B cell (primary cell): ENCODE measurements at regions of chr2 and their contacts with region 1.

Region 1: DNA sequence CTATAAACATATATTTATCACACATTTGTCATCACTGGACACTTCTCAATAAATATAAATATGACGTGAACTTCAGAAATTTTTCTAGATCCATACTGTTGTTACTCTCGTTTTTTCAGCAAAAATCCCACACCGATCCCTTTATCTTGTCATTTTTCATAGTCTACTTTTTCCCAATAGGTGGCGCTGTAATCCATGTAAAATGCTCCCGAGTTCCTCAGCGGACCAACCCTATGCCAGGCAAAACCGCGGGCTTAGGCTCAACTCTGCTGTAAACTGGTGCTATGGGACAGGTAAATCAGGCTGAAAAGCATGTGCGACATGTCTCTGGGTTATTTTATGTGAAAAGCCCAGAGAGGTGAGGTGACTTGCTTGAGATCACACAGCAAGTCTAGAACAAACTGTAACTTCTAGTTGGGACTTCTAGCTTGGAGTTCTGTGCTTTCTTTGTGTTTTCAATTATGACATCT is 104.0 kb downstream of the COBLL1 start:
- DNase-seq: peak; percentile 86
- ATAC-seq: peak; percentile 68
- H3K4me3 ChIP-seq: peak overlapping the region in 1 of 5 experiments; percentile 1
- H3K4me3 Mint-ChIP-seq: peak overlapping the region; percentile 16
- H3K27ac ChIP-seq: no peak overlapping the region
- H3K27ac Mint-ChIP-seq: peak overlapping the region; percentile 16
- H3K4me1 ChIP-seq: peaks cover 24 to 40% of the 10 kb centered on the region in 2 donors
- H3K4me1 Mint-ChIP-seq: peaks cover 63% of the 10 kb centered on the region
- H3K27me3 ChIP-seq: no peaks in the 10 kb centered on the region
- H3K27me3 Mint-ChIP-seq: no peaks in the 10 kb centered on the region
- CTCF ChIP-seq: peak; percentile 91

Region 2: DNA sequence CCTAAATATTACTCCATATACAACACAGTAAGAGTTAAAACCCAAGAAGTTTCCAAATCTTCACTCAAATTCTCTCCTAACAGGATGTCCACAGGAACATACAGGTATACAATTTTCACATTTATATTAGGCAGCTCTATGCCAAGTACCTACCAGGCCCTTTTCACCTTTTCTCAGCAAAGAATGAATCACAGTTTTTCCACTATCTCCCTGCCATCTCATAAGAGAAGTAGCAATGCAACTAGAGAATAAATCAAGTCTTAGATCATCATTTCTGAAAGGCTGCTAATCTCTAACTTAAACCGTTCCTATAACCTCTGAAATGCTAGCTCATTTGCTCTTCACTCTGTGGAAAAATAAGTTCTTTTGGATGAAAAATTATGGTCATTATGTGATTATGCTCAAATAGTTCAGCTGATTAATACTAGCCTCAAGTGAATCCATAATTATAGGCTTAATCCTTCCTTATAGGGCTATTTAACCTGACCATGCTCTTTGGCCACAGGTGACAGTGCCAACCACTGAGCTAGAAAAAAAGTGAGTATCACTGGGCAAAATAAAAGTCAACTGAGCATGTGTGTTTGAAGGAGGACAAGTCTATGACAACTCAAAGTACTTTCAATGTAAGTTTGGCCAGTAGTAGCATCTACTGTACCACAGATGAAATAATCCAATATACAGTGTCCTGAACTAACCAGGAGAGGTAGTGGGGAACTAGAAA is 24.3 kb after region 1 on chr2:
- CTCF ChIA-PET with region 1: interaction called, 20 read pairs
- POLR2A ChIA-PET with region 1: interaction called, 9 read pairs
- intact Hi-C with region 1: loop called (anchors 1 kb)
- DNase-seq: peak; percentile 47
- ATAC-seq: peak; percentile 22
- H3K4me3 ChIP-seq: peak overlapping the region in 1 of 5 experiments; percentile 76
- H3K4me3 Mint-ChIP-seq: peak overlapping the region; percentile 94
- H3K27ac ChIP-seq: peak overlapping the region; percentile 79 to 95
- H3K27ac Mint-ChIP-seq: peak overlapping the region; percentile 96
- H3K4me1 ChIP-seq: peaks cover 38 to 48% of the 10 kb centered on the region in 2 donors
- H3K4me1 Mint-ChIP-seq: peaks cover 46% of the 10 kb centered on the region
- H3K27me3 ChIP-seq: no peaks in the 10 kb centered on the region
- H3K27me3 Mint-ChIP-seq: no peaks in the 10 kb centered on the region
- CTCF ChIP-seq: no peak

Region 3: DNA sequence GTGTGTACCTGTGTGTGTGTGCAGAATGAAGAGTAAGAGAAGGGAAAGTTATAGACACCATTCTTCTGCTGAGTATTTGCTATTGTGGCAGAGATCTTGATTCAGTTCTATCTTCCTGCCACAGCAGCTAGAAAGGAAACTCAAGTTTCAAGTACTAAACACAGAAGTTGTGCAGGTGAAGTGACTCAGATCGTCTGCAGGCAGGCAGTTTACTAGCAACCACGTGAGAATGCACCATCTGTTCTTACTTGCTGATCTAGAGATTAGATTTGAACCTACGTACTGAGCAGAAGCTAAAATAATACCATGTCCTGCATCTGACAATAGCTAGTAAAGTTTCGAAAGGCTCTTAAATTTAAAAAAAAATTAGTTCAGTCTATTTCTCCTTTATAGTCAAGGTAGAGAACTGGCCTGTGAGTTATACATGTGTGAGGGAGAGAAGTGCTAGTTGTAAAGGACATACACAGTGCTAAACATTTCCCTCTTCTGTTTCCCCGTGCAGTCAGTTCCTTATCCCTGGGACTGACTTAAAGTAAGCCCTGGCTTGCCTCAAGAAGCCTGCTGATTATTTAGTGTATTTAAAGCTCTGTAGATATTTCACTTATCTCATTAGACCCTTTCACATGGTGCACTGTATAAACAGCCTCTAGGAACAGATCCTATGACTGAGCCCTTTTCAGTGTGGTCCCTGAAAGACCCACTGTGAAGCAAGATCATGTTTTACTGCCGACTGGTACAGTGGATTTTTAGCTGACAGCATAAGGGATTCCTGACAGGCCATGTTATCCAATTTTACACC is 172.7 kb after region 1 on chr2:
- CTCF ChIA-PET with region 1: interaction called, 102 read pairs
- POLR2A ChIA-PET with region 1: interaction called, 4 read pairs
- intact Hi-C with region 1: loop called (anchors 1 kb)
- DNase-seq: peak; percentile 50
- ATAC-seq: peak; percentile 79
- H3K4me3 ChIP-seq: peak overlapping the region in 1 of 5 experiments; percentile 13
- H3K4me3 Mint-ChIP-seq: peak overlapping the region; percentile 42
- H3K27ac ChIP-seq: peak overlapping the region; percentile 4 to 55
- H3K27ac Mint-ChIP-seq: peak overlapping the region; percentile 73
- H3K4me1 ChIP-seq: peaks cover 23 to 29% of the 10 kb centered on the region in 2 donors
- H3K4me1 Mint-ChIP-seq: peaks cover 36% of the 10 kb centered on the region
- H3K27me3 ChIP-seq: no peaks in the 10 kb centered on the region
- H3K27me3 Mint-ChIP-seq: no peaks in the 10 kb centered on the region
- CTCF ChIP-seq: no peak

Region 4: GRCh38 chr2:164928101-164928673 is 190.5 kb after region 1 on chr2:
- CTCF ChIA-PET with region 1: no interaction called
- POLR2A ChIA-PET with region 1: no interaction called
- intact Hi-C with region 1: no loop called
- DNase-seq: no peak
- ATAC-seq: no peak
- H3K4me3 ChIP-seq: no peak overlapping the region
- H3K4me3 Mint-ChIP-seq: no peak overlapping the region
- H3K27ac ChIP-seq: no peak overlapping the region
- H3K27ac Mint-ChIP-seq: no peak overlapping the region
- H3K4me1 ChIP-seq: peaks cover 3 to 18% of the 10 kb centered on the region in 2 donors
- H3K4me1 Mint-ChIP-seq: peaks cover 26% of the 10 kb centered on the region
- H3K27me3 ChIP-seq: no peaks in the 10 kb centered on the region
- H3K27me3 Mint-ChIP-seq: no peaks in the 10 kb centered on the region
- CTCF ChIP-seq: no peak

Region 5: GRCh38 chr2:164974221-164974620 is 236.6 kb after region 1 on chr2:
- CTCF ChIA-PET with region 1: interaction called, 4 read pairs
- POLR2A ChIA-PET with region 1: no interaction called
- intact Hi-C with region 1: loop called (anchors 5 kb)
- DNase-seq: no peak
- ATAC-seq: no peak
- H3K4me3 ChIP-seq: no peak overlapping the region
- H3K4me3 Mint-ChIP-seq: peak overlapping the region; percentile 33
- H3K27ac ChIP-seq: peak overlapping the region; percentile 21 to 79
- H3K27ac Mint-ChIP-seq: peak overlapping the region; percentile 46
- H3K4me1 ChIP-seq: peaks cover 73 to 84% of the 10 kb centered on the region in 2 donors
- H3K4me1 Mint-ChIP-seq: peaks cover 80% of the 10 kb centered on the region
- H3K27me3 ChIP-seq: no peaks in the 10 kb centered on the region
- H3K27me3 Mint-ChIP-seq: no peaks in the 10 kb centered on the region
- CTCF ChIP-seq: no peak

Region 6: DNA sequence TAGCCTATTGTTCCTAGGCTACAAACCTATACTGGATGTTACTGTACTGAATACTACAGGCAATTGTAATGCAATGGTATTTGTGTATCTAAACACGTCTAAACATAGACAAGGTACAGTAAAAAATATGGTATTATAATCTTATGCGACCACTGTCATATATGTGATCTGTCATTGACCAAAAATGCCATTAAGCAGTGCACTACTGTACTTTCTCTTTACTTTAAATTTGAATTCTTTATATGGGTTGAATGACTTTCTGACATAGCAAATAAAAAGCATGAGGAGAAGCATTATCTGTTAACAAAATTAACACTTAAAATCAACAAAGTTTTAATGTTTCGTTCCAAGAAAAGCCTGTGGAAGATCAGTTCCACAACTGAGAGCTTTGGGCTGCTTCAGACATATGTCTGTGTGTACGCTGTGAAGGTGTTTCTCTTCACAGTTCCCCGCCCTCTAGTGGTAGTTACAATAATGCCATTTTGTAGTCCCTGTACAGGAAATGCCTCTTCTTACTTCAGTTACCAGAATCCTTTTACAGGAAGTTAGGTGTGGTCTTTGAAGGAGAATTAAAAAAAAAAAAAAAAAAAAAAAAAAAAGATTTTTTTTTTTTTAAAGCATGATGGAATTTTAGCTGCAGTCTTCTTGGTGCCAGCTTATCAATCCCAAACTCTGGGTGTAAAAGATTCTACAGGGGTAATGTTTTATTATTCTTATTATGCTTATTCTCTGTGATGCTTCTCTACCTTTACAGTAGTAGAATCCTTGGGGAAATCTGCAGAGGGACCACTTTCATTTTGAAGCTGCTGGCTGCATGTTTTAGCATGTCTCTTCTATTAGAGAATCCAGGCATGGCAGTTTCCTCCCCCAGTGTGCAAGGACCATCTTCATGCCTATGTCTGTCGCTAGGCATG is 556.0 kb after region 1 on chr2:
- CTCF ChIA-PET with region 1: interaction called, 3 read pairs
- POLR2A ChIA-PET with region 1: no interaction called
- intact Hi-C with region 1: loop called (anchors 2 kb)
- DNase-seq: peak; percentile 90
- ATAC-seq: peak; percentile 100
- H3K4me3 ChIP-seq: no peak overlapping the region
- H3K4me3 Mint-ChIP-seq: no peak overlapping the region
- H3K27ac ChIP-seq: no peak overlapping the region
- H3K27ac Mint-ChIP-seq: no peak overlapping the region
- H3K4me1 ChIP-seq: peaks cover 3 to 7% of the 10 kb centered on the region in 2 donors
- H3K4me1 Mint-ChIP-seq: peaks cover 3% of the 10 kb centered on the region
- H3K27me3 ChIP-seq: no peaks in the 10 kb centered on the region
- H3K27me3 Mint-ChIP-seq: peaks cover 9% of the 10 kb centered on the region
- CTCF ChIP-seq: peak; percentile 84